ENCODE measurements at regions of chr2 and their contacts with region 1.

Region 1: GRCh38 chr2:8488001-8488738 is 193.7 kb upstream of the ID2 start:
- DNase-seq: peak; percentile 80
- ATAC-seq: peak; percentile 85
- H3K4me3 Mint-ChIP-seq: peak overlapping the region; percentile 72
- H3K27ac Mint-ChIP-seq: peak overlapping the region; percentile 86
- H3K4me1 Mint-ChIP-seq: peaks cover 49% of the 10 kb centered on the region
- H3K27me3 Mint-ChIP-seq: no peaks in the 10 kb centered on the region

Region 2: GRCh38 chr2:8312861-8313830 is 175.0 kb before region 1 on chr2:
- CTCF ChIA-PET with region 1: no interaction called
- POLR2A ChIA-PET with region 1: no interaction called
- intact Hi-C with region 1: loop called in 1 of 2 experiments (anchors 10 kb)
- DNase-seq: no peak
- ATAC-seq: peak; percentile 38
- H3K4me3 Mint-ChIP-seq: no peak overlapping the region
- H3K27ac Mint-ChIP-seq: no peak overlapping the region
- H3K4me1 Mint-ChIP-seq: peaks cover 38% of the 10 kb centered on the region
- H3K27me3 Mint-ChIP-seq: peaks cover 5% of the 10 kb centered on the region

Region 3: DNA sequence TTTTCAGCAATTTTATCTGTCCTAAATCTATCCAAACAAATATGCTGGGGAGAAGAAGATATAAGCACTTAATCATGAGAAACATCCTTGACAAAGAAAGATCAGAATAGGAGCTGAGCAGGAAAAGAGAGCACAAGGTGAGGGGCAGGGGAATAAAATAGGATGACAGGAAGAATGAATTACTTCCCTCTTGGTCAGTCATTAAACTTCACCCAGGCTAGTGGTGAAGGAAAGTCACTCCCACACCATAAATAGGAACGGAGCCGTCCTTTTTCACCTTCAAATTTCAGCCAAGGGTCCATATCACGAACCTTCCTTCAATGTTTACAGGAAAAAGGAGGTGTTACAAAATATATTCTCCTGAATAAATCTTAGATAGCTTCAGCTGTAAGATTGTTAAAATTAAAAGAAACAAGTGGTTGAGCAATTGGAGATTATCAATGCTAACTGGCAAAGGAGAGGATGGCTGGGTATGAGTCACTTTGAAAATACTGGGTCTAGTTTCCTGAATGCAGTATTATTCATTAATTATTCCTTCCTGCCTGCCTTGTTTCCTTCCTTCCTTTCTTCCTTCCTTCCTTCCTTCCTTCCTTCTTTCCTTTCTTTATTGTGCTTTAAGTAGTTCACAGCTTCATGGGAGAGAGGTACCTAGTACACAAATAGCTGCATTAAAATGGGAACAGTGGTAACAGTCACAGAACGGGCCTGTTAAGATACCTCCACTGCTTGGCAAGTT is 98.6 kb before region 1 on chr2:
- CTCF ChIA-PET with region 1: no interaction called
- POLR2A ChIA-PET with region 1: no interaction called
- intact Hi-C with region 1: no loop called
- DNase-seq: no peak
- ATAC-seq: no peak
- H3K4me3 Mint-ChIP-seq: no peak overlapping the region
- H3K27ac Mint-ChIP-seq: no peak overlapping the region
- H3K4me1 Mint-ChIP-seq: peaks cover 6% of the 10 kb centered on the region
- H3K27me3 Mint-ChIP-seq: no peaks in the 10 kb centered on the region